MCF 10A (cell line): ENCODE measurements at regions of chr5 and their contacts with region 1.

Region 1: GRCh38 chr5:148179234-148179824 is 11.0 kb downstream of the SPINK14 start:
- DNase-seq: peak; percentile 84
- H3K4me3 Mint-ChIP-seq: no peak overlapping the region
- H3K27ac Mint-ChIP-seq: no peak overlapping the region
- H3K4me1 Mint-ChIP-seq: no peaks in the 10 kb centered on the region
- H3K27me3 Mint-ChIP-seq: peaks cover 7% of the 10 kb centered on the region
- CTCF ChIP-seq: peak; percentile 94

Region 2: DNA sequence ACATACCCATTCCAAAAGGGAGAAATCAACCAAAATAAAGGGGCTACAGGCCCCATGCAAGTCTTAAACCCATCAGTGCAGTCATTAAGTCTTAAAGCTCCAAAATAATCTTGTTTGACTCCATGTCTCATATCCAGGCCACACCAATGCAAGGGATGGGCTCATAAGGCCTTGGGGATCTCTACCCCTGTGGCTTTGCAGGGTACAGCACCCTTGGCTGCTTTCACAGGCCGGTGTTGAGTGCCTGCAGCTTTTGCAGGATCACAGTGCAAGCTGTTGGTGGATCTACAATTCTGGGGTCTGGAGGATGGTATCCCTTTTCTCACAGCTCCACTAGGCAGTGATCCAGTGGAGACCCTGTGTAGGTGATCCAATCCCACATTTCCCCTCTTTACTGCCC is 16.0 kb before region 1 on chr5:
- CTCF ChIA-PET with region 1: interaction called, 12 read pairs
- POLR2A ChIA-PET with region 1: no interaction called
- intact Hi-C with region 1: no loop called
- DNase-seq: no peak
- H3K4me3 Mint-ChIP-seq: no peak overlapping the region
- H3K27ac Mint-ChIP-seq: no peak overlapping the region
- H3K4me1 Mint-ChIP-seq: no peaks in the 10 kb centered on the region
- H3K27me3 Mint-ChIP-seq: no peaks in the 10 kb centered on the region
- CTCF ChIP-seq: no peak

Region 3: DNA sequence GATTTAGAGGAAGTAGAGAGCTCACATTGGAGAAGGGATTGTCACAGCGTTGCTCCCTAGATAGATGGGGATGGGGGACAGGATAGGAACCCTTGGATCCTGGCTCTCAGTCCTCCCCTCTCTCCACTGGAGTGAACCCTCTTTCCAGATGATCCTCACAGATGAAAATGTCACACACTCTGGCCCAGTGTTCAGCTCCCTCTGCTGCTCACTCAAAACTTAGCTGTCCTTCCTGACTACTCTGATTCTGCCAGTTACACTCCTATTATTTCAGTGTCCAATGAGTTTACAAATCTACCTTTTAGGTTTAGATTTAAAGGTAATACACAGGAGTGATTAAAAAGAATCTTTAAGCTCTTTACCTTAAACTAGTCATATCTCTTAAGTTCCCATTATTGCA is 127.1 kb after region 1 on chr5:
- CTCF ChIA-PET with region 1: interaction called, 5 read pairs
- POLR2A ChIA-PET with region 1: no interaction called
- intact Hi-C with region 1: loop called (anchors 1 kb)
- DNase-seq: peak; percentile 7
- H3K4me3 Mint-ChIP-seq: no peak overlapping the region
- H3K27ac Mint-ChIP-seq: no peak overlapping the region
- H3K4me1 Mint-ChIP-seq: no peaks in the 10 kb centered on the region
- H3K27me3 Mint-ChIP-seq: no peaks in the 10 kb centered on the region
- CTCF ChIP-seq: no peak

Region 4: DNA sequence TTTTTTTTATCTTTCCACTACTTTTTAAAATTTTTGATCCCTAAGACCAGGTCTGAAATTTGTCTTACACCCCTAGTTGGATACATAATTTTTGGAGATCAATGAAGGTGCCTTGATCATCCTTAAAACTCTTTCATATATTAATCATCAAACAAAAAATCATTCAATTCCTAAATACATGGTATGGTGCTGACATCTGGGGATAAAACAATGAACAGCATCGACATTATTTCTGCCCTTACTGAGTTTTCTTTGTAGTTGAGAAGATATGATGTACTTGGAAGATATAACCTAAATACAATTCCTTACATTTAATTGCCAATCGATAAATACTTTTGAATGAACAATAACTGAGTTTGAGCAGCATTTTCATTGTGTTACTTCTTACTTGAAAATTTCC is 174.3 kb after region 1 on chr5:
- CTCF ChIA-PET with region 1: interaction called, 6 read pairs
- POLR2A ChIA-PET with region 1: no interaction called
- intact Hi-C with region 1: loop called (anchors 1 kb)
- DNase-seq: peak; percentile 14
- H3K4me3 Mint-ChIP-seq: no peak overlapping the region
- H3K27ac Mint-ChIP-seq: no peak overlapping the region
- H3K4me1 Mint-ChIP-seq: no peaks in the 10 kb centered on the region
- H3K27me3 Mint-ChIP-seq: no peaks in the 10 kb centered on the region
- CTCF ChIP-seq: peak; percentile 29

Region 5: DNA sequence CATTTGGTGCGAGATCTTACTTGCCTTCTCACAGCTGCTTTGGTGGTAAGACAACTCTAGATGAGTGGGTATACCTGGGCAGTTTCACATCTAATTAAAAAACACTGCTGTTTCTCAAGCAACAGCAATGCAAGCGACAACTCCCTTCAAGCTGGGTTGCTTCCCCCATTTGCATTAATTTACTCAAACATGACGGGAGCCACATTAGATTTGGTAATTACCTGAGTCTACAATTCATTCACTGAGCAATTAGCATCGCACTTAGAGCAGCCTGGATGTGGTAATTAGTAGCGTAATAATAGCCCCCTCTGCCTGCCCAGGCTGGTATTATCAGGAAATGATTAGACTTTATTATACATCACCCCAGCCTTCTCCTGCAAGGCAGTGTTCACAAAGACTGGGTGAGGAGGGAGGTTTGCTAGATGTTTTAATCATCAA is 277.9 kb after region 1 on chr5:
- CTCF ChIA-PET with region 1: interaction called, 5 read pairs
- POLR2A ChIA-PET with region 1: no interaction called
- intact Hi-C with region 1: loop called (anchors 1 kb)
- DNase-seq: peak; percentile 60
- H3K4me3 Mint-ChIP-seq: no peak overlapping the region
- H3K27ac Mint-ChIP-seq: no peak overlapping the region
- H3K4me1 Mint-ChIP-seq: no peaks in the 10 kb centered on the region
- H3K27me3 Mint-ChIP-seq: peaks cover 45% of the 10 kb centered on the region
- CTCF ChIP-seq: peak; percentile 52

Region 6: DNA sequence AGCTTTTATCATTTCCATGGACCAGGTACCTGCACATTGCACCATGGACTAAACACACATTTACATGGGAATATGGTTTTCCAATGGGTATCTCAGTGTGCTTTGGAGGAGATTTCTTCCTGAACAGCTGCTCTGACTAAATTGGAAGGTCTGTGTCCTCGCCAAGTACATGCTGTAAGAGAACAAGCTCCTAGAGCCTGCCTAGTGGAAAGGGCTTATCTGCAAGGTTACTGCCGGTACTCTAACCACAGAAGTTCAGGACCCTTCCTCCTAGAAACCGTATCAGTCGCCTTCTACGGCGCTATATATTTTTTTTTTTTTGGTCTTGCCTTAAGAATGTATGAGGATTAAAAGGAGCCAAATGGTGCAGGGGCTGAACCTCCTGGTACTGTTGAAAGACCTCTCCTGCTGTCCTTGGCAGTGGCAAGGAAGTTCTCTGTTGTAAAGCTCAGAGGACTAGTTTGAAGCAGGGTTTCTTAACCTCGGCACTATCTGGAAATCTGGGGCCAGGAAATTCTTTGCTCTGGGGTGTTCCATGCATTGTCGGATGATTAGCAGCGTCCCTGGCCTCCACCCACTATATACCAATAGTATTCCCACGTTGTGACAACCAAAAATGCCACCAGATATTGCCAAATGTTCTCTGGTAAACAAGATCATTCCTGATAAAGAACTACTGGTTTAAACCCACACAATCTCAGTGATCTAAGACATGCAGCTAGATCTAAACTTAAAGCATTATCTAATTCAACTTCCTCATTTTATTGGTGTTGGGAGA is 311.9 kb after region 1 on chr5:
- CTCF ChIA-PET with region 1: no interaction called
- POLR2A ChIA-PET with region 1: no interaction called
- intact Hi-C with region 1: no loop called
- DNase-seq: no peak
- H3K4me3 Mint-ChIP-seq: no peak overlapping the region
- H3K27ac Mint-ChIP-seq: no peak overlapping the region
- H3K4me1 Mint-ChIP-seq: no peaks in the 10 kb centered on the region
- H3K27me3 Mint-ChIP-seq: peaks cover 80% of the 10 kb centered on the region
- CTCF ChIP-seq: no peak